Gastrocnemius medialis (tissue), 4 donors: ENCODE measurements at regions of chr11 and their contacts with region 1.

Region 1: DNA sequence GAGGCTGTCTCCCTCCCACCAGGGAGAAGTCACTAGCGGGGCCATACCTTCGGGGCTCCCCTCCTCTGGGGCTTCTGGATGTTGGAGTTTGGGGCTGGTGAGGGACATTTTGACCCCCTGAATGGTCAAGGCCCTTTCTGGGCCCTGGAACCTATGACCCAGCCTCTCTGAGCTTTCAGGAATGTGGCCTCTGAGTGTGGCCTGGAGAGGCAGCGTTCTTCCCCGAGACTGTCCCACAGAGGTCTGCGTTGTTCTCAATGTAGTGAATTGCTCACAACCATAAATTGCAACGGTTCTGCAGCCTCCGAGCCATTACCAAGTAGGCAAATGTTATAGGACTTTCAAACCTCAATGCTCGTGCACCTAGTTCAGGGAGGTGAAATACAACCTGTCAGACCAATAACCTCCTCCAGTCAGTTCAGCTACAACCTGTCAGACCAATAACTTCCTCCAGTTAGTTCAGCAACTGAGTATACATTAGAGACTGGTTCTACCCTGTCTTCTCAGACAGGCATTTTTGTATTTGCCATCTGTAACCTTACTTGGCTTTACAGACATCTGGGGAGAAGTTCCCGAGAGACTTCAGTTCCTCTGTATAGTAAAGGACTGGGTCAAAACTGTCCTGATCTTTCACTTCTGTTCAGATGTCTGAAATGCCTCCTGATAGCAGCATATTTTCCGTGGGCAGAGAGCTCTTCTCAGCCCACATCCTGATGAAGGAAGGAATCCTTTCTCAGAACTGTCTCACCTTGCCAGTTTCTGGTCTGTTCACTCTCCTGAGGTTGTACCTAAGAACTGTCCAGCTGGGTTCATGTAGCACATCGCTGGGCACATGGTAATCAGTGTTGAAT is 34.2 kb downstream of the MICAL2 start:
- DNase-seq: no peak
- ATAC-seq: no peak
- H3K4me3 ChIP-seq: no peak overlapping the region
- H3K27ac ChIP-seq: peak overlapping the region in 3 of 4 donors; percentile 4 to 54 (median 39)
- H3K4me1 ChIP-seq: no peaks in the 10 kb centered on the region
- H3K27me3 ChIP-seq: no peaks in the 10 kb centered on the region
- CTCF ChIP-seq: no peak
- POLR2A ChIP-seq: no peak

Region 2: DNA sequence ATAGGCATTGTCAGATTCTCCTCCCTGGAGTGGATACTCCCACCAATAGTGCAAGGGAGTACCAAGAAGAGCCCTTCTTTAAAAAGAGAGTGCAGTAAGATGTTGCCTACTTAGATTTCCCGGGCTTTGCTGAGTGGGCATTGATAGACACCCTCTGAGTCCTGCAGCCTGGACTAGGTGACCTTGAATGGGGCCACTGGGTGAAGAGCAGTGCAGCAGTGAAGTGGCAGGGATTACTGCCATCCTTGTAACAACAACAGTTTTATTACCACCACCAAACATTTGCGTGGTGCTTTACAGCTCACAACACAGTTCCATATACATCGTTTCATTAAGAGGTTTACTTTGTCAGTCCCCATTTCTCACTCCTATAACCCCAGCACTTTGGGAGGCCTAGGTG is 25.3 kb after region 1 on chr11:
- in situ Hi-C with region 1: no loop called
- intact Hi-C with region 1: loop called (anchors 2 kb)
- DNase-seq: no peak
- ATAC-seq: no peak
- H3K4me3 ChIP-seq: no peak overlapping the region
- H3K27ac ChIP-seq: no peak overlapping the region
- H3K4me1 ChIP-seq: no peaks in the 10 kb centered on the region
- H3K27me3 ChIP-seq: no peaks in the 10 kb centered on the region
- CTCF ChIP-seq: no peak
- POLR2A ChIP-seq: no peak